ENCODE measurements at regions of chr2 and their contacts with region 1.

Region 1: DNA sequence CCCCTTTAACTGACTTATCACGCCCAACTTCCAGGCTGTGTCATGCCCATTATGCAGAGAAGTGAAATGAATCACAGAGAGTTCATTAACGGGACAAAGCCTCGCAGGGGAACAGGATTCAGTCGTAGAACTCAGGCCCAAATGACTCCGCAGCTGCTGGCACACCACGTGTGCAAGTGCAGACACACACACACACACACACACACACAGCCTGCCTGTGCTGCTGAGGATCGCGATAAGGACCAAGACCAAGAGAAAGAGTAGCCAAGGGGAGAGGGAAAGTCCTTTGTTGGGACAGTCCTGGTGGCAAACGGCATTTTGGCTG is 90.0 kb upstream of the TAF1B start:
- DNase-seq: peak; percentile 79
- CTCF ChIP-seq: no peak

Region 2: DNA sequence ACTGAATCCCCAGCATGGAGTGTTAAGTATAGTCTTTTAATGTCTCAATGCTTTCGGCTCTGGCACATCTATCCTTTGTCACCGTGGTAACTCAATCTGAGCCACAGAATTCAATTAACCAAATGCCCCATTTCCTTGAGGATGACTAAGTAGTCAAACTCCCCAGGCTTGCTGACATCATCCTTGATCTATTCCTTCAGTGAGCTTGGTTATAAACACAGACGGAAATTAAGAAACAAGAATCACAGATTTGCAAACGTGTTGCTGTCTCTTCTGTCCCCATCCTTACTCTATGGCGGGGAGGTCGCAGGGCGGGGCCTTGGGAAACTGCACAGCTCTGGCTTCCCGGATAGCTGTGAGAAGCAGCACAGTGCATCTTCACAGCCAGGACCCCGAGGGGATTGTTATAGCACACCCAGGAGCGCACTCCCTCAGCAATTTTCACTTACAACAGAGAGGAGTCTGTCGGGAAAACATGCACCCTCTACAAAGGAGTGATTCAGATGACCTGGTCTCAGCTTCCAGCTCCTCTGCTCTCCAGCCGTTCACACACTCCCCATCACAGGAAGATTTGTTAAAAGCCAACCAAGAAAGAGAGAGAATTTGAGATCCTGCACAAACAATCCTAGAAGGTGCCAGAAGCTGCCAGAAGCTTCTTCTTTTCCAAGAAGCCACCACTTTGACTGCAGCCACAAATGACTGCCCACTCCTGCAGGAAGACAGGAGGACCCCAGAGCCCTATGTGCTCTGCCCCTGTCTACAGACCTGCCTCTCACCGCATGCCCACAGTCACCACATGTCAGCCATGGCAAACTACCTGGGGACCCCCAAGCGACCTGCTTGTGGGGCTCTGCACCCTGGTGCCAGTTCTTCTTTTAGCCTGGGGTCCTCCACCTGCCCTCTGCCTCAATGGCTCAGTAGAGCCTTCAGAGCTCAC is 77.6 kb before region 1 on chr2:
- CTCF ChIA-PET with region 1: no interaction called
- POLR2A ChIA-PET with region 1: no interaction called
- DNase-seq: no peak
- CTCF ChIP-seq: no peak

Region 3: GRCh38 chr2:9770308-9771100 is 17.3 kb after region 1 on chr2:
- CTCF ChIA-PET with region 1: interaction called, 49 read pairs
- POLR2A ChIA-PET with region 1: no interaction called
- DNase-seq: peak; percentile 73
- CTCF ChIP-seq: peak; percentile 70